ENCODE measurements at regions of chr15 and their contacts with region 1.

Region 1: DNA sequence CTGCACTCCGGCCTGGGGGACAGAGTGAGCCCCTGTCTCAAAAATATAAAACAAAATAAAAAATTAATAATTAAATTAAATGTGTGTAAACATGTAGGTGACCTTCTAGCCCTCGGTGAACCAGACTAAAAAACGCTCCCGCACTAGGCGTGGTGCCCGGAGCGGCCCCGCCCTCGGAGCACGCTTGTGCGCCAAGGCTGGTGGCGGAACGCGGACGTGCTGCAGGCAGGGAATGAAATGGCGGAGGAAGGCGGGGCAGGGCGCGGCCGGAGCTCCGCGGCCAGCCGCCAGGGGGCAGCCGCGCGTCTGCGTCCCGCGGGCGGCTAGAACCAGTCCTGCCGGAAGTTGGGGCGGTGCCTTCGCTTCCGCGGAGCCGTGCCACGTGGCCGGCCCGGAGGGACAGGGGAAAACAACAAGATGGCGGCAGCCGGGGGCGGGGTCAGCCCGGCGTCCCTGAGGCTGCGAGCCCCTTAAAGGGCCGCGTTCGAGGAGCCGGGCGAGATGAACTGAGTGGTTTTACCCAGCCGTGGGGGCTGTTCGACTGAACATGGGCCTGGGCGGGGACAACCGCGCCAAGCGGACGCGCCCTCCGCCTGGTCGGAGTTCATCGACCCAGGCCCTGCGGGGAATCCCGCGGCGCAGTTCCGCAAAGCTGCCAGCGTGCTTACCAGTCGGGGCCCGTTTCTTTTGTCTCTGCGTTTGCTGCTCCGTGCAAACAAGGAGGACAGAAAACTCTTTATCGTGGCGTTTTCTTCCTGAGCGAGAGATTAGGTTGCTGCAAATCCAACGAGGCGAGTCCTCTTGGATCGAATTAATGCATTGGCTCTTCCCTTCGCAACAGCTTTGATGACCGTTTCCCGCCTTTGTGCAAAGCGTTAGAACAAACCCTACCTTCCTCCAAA is 90.9 kb upstream of the CHD2 start:
- DNase-seq: peak; percentile 99 to 100 (median 100)
- ATAC-seq: peak; percentile 94
- H3K4me3 ChIP-seq: peak overlapping the region; percentile 75
- H3K27ac ChIP-seq: peak overlapping the region; percentile 99
- H3K4me1 ChIP-seq: peaks cover 2% of the 10 kb centered on the region
- H3K27me3 ChIP-seq: no peaks in the 10 kb centered on the region

Region 2: GRCh38 chr15:92881802-92882696 is 72.8 kb after region 1 on chr15:
- intact Hi-C with region 1: loop called in 3 of 4 experiments (anchors 2 to 5 kb)
- DNase-seq: peak; percentile 98 to 99 (median 99)
- ATAC-seq: peak; percentile 96 to 97
- H3K4me3 ChIP-seq: peak overlapping the region; percentile 43
- H3K27ac ChIP-seq: peak overlapping the region; percentile 93
- H3K4me1 ChIP-seq: peaks cover 9% of the 10 kb centered on the region
- H3K27me3 ChIP-seq: no peaks in the 10 kb centered on the region

Region 3: DNA sequence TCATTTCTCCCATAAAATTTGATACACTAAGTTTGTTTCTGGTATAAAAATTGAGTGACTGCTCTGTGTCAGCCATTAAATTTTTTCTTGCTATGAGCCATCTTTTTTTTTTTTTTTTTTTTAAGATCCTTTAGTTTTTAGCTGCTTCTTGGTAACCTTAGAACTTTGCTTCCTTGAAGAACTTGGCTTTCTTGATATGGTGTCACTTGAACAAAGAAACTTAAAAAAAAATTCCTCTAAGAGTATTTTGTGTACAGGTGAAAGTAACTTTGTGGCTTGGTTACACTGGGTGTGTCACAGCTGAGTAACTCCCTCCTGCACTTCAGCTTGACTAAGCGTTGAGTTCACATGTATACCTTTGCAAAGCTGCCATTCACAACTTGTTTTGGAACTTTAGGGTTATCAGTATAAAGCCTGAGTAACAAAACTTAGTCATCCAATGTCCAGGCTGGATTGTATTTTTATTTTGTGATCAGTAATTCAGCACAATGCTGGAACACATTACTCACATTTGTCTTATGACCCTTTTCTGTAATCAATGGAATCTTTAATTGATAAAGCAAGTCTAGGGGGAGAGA is 97.4 kb after region 1 on chr15:
- intact Hi-C with region 1: loop called in 1 of 4 experiments (anchors 5 kb)
- DNase-seq: no peak
- ATAC-seq: no peak
- H3K4me3 ChIP-seq: no peak overlapping the region
- H3K27ac ChIP-seq: peak overlapping the region; percentile 65
- H3K4me1 ChIP-seq: peaks cover 14% of the 10 kb centered on the region
- H3K27me3 ChIP-seq: no peaks in the 10 kb centered on the region

Region 4: DNA sequence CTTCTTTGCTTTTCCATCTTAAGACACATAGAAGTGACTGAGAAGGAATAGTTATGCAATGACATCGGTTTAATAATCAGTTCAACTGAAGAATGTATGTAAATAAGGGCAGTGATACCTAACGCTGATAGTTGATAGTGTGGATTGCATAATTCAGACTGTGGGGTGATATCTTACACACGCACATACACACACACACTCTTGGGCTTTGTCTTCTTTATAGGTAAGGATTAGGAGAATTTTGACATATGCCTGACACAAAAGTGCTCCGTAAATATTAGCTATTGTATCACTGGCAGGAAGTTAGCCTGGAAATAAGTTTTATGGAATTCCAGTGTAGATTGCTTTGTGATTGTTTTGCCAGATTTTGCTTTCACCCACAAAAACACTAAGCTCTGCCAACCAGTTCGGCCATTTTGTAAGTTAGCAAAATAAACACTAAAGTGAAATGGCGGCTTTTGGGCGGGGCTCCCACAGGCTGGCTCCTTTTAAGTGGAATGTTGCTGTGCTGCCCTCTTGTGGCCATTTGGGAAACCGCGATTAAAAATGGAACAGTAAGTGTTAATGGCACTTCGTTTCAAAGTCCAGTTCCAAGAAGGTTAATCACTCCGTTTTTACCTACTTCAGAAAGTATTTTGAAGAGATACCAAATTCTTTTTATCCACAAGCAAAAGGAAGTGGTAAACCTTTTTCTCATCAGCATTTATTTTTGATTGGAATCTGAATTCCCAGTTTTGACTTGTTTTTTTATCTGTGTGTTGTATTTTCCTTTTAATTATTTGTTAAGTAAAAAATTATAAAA is 108.6 kb after region 1 on chr15:
- intact Hi-C with region 1: loop called (anchors 2 to 10 kb)
- DNase-seq: peak; percentile 93 to 98 (median 95)
- ATAC-seq: peak; percentile 60 to 71
- H3K4me3 ChIP-seq: no peak overlapping the region
- H3K27ac ChIP-seq: peak overlapping the region; percentile 70
- H3K4me1 ChIP-seq: peaks cover 20% of the 10 kb centered on the region
- H3K27me3 ChIP-seq: no peaks in the 10 kb centered on the region

Region 5: GRCh38 chr15:93018580-93018979 is 209.4 kb after region 1 on chr15:
- intact Hi-C with region 1: loop called in 2 of 4 experiments (anchors 10 kb)
- DNase-seq: peak in 1 of 3 donors; percentile 45
- ATAC-seq: peak in 1 of 2 donors; percentile 27
- H3K4me3 ChIP-seq: no peak overlapping the region
- H3K27ac ChIP-seq: no peak overlapping the region
- H3K4me1 ChIP-seq: peaks cover 5% of the 10 kb centered on the region
- H3K27me3 ChIP-seq: no peaks in the 10 kb centered on the region

Region 6: GRCh38 chr15:93030430-93031105 is 221.3 kb after region 1 on chr15:
- intact Hi-C with region 1: loop called in 1 of 4 experiments (anchors 10 kb)
- DNase-seq: peak; percentile 72 to 84 (median 82)
- ATAC-seq: peak; percentile 58 to 65
- H3K4me3 ChIP-seq: no peak overlapping the region
- H3K27ac ChIP-seq: no peak overlapping the region
- H3K4me1 ChIP-seq: peaks cover 22% of the 10 kb centered on the region
- H3K27me3 ChIP-seq: no peaks in the 10 kb centered on the region

Measured in right cardiac atrium (tissue), 5 donors.